IMR-90 (cell line): ENCODE measurements at regions of chr1 and their contacts with region 1.

Region 1: DNA sequence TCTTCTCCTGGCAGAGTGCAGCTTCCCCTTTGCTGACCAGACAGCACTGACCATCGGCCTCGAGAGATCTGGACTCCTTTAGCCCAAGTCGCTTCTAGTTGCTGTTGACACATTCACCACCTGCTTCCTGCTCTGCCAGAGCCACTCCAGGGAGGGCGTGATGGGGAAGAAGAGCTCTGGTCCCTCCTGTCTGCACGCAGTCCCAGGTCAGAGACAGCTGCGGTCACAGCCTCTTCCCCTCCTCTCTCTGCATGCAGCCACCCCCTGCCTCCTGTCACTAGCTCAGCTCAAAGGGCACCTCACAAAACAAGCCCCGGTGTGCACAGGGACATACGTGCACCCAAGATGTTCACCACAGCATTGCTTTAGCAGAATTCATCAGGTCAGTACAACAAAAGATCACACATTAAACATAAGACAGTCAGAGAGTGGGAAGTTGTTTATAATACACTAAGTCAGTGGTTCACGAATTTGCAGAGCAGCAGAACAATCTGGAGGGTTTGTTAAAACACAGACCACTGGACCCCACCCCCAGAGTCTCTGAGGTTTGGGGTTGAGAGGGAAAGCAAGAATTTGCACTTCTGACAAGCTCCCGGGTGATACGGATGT is 132.9 kb downstream of the SYF2 start:
- DNase-seq: no peak
- ATAC-seq: no peak
- H3K4me3 ChIP-seq: no peak overlapping the region
- H3K27ac ChIP-seq: no peak overlapping the region
- H3K4me1 ChIP-seq: no peaks in the 10 kb centered on the region
- H3K27me3 ChIP-seq: peaks cover 60% of the 10 kb centered on the region
- CTCF ChIP-seq: no peak
- POLR2A ChIP-seq: no peak
- RAD21 ChIP-seq: no peak

Region 2: DNA sequence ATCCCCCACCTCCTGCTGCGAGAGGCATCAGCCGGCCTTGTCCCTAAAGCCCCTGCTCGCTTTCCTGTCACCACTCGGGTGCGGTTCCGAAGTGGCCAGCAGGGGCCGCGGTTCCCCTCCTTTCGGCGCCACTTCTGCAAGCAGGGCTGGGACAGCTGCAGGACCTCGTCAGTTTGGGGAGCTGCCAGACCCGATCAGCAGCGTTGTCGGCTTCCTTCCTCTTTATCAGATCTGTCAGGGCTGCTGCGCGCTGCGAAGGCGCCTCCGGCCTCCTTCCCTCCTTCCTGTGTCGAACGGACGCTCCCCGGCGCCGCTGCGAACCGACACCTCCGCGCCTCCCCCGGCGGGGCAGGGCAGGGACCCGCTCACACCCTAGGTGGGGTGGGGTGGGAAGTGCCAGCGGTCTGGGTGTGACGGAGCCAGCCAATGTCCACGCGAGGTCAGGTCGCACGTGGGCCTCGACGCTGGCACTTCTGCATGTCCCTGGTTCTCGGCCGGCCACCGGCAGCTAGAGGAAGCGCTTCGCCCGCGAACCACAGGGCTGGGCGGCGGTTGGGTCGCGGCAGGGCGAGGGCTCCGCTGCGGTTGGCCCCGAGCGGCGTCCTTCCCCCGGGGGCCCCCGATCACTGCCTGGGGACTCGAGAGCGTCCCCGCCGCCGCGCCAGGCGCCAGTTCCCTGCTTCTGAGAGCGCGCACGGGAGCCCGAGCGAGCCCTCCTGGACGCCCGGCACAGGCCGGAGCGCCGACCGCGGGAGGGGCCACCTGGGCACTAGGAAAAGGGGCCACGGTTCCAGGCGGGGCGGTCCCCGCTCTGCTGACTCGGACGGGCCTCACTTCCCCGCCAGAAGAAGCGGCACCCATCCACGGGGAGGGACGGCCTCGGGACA is 251.2 kb before region 1 on chr1:
- CTCF ChIA-PET with region 1: no interaction called
- POLR2A ChIA-PET with region 1: interaction called, 3 read pairs
- dilution Hi-C with region 1: no loop called
- in situ Hi-C with region 1: loop called (anchors 5 kb)
- intact Hi-C with region 1: loop called (anchors 1 kb)
- DNase-seq: peak; percentile 86
- ATAC-seq: peak; percentile 87
- H3K4me3 ChIP-seq: peak overlapping the region; percentile 28
- H3K27ac ChIP-seq: peak overlapping the region; percentile 12; the same call in 1 of the 2 replicates
- H3K4me1 ChIP-seq: peaks cover 8% of the 10 kb centered on the region; the same call in 1 of the 2 replicates
- H3K27me3 ChIP-seq: no peaks in the 10 kb centered on the region
- CTCF ChIP-seq: peak; percentile 80
- POLR2A ChIP-seq: peak; percentile 31; the same call in 1 of the 2 replicates
- RAD21 ChIP-seq: peak; percentile 76

Region 3: DNA sequence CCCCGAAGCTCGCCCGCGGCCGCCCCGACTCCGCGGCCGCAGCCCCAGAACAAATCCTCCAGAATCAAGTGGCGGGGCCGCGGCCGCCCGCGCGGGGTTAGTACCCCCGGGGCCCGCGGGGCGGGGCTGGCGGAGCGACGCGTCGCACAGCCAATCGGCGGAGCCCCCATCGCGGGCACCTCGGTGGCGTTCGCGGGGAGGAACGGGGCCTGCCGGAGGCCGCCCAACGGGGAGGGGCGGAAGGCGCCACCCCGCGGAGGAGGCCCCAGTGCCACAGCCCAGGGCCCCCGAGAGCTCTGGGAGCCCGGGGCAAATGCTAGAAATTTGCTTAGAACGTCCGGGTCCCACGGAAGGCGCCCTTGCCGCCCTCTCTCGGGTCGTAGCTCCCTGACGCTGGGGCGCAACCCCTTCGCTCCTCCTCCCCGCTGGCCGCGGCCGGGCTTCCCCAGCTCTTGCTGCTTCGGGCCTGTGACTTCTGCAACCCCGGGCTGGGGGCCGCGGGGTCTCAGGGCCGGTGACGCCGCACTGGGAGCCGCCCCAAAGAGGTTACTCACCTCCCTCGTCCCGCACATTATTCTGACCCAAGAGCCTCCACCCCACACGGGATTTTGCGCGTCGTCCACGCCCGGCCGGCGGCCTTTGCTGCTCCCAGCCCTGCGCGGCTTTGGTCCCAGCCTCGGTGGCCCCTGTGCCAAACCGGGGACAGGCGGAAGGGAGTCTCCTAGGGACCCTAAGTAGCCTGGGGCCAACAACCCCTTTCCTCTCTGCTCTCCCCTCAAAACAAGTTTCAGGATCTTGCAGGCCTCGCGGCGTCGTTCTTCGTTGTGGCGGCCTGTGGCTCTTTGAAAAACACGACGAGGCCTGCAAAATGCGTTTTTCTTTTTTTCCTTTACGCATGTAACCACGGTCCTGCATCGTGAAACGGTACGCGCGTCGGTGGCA is 169.0 kb before region 1 on chr1 and contains the start of gene RUNX3:
- CTCF ChIA-PET with region 1: interaction called, 3 read pairs
- POLR2A ChIA-PET with region 1: interaction called, 5 read pairs
- dilution Hi-C with region 1: no loop called
- in situ Hi-C with region 1: loop called (anchors 5 kb)
- intact Hi-C with region 1: loop called (anchors 1 kb)
- DNase-seq: no peak
- ATAC-seq: 0 out of 2 replicates have a peak, but pooled peaks have one; percentile 24
- H3K4me3 ChIP-seq: peak within 1 kb of the TSS; percentile 31; the same call in 1 of the 2 replicates
- H3K27ac ChIP-seq: no peak within 1 kb of the TSS
- H3K4me1 ChIP-seq: peaks cover 2% of the 10 kb centered on the region; the same call in 1 of the 2 replicates
- H3K27me3 ChIP-seq: peaks cover 92% of the 10 kb centered on the region
- CTCF ChIP-seq: no peak
- POLR2A ChIP-seq: no peak
- RAD21 ChIP-seq: no peak
- total RNA-seq, gene RUNX3: not detected in 2 replicates